ENCODE measurements at regions of chr10 and their contacts with region 1.

Region 1: DNA sequence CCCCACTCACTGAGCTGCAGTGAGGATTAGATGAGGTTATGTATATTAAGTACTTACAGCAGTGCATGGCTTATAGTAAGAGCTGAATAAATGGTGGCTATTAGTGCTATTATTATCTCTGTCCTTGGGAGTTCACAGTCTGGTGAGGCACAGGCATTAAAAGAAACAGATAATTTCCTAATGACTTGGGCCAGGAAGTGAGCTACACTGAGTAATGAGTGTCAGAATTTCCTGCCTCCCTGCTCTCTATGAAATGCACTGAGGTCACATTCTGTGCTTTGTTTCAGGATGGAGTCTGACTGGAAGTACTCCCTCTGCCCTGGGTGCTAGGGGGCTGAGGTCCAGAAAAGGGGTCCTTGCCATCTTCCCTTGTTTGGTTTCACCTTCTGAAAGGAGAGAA is 48.7 kb upstream of the LOXL4 start:
- DNase-seq: peak; percentile 82
- H3K4me3 ChIP-seq: peak overlapping the region in 1 of 3 experiments; percentile 3
- H3K27ac ChIP-seq: no peak overlapping the region
- H3K4me1 ChIP-seq: peaks cover 16% of the 10 kb centered on the region
- H3K27me3 ChIP-seq: peaks cover 0 to 10% of the 10 kb centered on the region in 2 experiments
- CTCF ChIP-seq: no peak
- POLR2A ChIP-seq: no peak

Region 2: GRCh38 chr10:98331885-98332284 is 15.2 kb after region 1 on chr10:
- CTCF ChIA-PET with region 1: interaction called, 5 read pairs
- POLR2A ChIA-PET with region 1: no interaction called
- dilution Hi-C with region 1: no loop called
- intact Hi-C with region 1: loop called (anchors 2 kb)
- DNase-seq: no peak
- H3K4me3 ChIP-seq: no peak overlapping the region
- H3K27ac ChIP-seq: no peak overlapping the region
- H3K4me1 ChIP-seq: no peaks in the 10 kb centered on the region
- H3K27me3 ChIP-seq: peaks cover 3 to 8% of the 10 kb centered on the region in 2 experiments
- CTCF ChIP-seq: peak; percentile 41 to 43
- POLR2A ChIP-seq: no peak

Region 3: DNA sequence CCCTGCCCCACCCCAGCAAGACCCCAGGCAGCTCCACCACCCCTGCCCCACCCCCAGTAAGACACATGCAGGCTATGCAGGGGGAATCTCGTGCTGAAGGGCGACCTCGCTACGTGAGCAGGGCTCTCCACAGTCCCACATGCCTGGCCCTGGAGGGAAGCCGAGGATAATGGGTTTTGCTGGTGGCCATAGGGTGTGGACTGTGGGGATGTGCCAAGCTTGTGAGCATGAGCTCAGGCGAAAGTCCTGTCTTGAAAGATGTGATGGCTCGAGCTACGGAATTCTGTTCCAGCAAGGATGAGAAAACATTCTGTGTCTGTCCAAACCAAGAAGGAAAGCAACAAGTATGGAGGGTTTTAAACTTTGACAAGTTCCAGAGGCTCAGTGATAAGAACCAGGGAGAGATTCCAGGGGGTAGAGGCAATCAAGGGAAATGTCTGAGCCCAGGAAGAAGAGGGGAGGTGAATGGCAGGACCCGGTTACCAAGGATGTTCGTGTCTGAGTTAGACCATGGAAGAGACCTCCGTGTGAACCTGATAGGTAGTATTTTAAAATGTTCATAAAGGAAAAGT is 35.3 kb after region 1 on chr10:
- CTCF ChIA-PET with region 1: no interaction called
- POLR2A ChIA-PET with region 1: no interaction called
- dilution Hi-C with region 1: no loop called
- intact Hi-C with region 1: loop called (anchors 2 kb)
- DNase-seq: no peak
- H3K4me3 ChIP-seq: no peak overlapping the region
- H3K27ac ChIP-seq: no peak overlapping the region
- H3K4me1 ChIP-seq: peaks cover 11% of the 10 kb centered on the region
- H3K27me3 ChIP-seq: peaks cover 35 to 43% of the 10 kb centered on the region in 2 experiments
- CTCF ChIP-seq: no peak
- POLR2A ChIP-seq: no peak

Region 4: DNA sequence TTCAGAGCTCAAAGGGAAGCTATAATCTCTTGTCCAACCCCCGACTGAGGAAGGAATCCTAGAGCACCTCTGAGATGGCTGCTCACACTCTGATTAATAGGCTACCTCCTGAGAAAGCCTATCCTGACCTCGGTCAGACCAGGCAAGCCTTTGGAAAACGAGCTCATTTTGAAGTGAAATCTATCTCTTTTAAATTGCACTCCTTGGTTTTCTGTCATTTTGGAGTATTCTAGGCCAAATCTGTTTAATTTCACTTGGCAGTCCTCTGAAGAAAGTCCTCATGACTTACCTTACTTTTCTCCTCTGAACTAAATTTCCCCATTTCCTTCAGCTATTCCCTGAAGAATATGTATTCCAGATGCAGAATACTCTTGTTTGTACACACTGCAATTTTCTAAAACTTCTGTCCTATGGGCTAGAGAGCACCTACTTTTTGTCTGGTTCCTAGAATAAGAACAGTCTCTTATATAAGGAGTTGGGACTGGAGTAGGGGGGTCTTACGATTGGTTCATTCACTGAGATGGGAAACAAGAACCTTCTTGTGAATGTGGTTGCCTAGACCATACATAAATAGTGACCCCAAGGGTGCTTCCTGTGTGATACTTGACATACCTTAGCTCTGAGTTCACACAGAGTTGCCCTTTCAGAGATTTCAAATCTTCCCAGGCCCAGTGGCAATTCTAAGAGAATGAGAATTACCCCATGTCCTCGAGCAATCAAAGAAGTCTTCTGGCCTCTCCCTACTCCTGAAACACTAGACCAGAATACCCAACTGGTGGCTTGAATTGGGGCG is 162.0 kb after region 1 on chr10:
- CTCF ChIA-PET with region 1: no interaction called
- POLR2A ChIA-PET with region 1: no interaction called
- dilution Hi-C with region 1: no loop called
- intact Hi-C with region 1: no loop called
- DNase-seq: no peak
- H3K4me3 ChIP-seq: no peak overlapping the region
- H3K27ac ChIP-seq: no peak overlapping the region
- H3K4me1 ChIP-seq: no peaks in the 10 kb centered on the region
- H3K27me3 ChIP-seq: no peaks in the 10 kb centered on the region
- CTCF ChIP-seq: no peak
- POLR2A ChIP-seq: no peak

Measured in endothelial cell of umbilical vein (primary cell).